RWPE1 (cell line): ENCODE measurements at regions of chr11 and their contacts with region 1.

Region 1: DNA sequence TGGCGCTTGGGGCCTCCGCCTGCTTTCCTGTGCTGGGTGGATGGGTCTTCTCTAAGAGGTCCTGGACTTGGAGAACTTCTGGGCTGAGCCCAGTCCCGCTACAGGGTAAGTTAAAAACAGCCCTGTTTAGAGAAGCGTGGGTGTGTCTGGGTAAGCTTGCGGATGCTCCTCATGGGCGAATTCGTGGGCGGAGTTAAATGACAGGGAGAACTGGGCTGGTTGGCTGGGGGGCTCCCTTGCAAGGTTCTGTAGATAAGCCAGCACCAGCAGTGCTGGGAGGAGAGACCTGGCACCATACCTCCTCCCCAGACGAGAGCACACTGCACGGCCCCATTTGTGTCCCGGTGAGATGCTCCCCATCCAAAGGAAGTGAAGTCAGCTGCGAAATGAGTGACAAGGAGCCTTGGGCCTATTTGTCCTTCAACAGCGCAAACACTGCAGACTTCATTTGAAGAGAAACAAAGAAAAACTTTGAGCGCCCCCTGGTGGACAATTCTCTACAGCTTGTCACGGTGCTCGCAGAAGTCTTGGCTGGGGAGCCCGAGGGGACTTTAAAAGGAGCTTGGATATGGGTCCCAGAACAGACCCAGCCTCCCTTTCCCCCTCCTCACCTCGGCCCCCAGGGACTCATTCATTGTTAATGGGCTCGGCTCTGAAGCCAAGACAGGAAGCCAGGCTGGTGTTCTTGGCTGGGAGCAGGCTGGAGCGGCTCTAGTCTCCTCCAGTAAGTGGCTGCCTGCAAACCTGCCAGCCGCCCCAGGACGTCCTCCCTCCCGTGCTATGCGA is 39.5 kb downstream of the TP53I11 start:
- DNase-seq: peak; percentile 69
- H3K27ac ChIP-seq: no peak overlapping the region
- CTCF ChIP-seq: peak; percentile 76

Region 2: DNA sequence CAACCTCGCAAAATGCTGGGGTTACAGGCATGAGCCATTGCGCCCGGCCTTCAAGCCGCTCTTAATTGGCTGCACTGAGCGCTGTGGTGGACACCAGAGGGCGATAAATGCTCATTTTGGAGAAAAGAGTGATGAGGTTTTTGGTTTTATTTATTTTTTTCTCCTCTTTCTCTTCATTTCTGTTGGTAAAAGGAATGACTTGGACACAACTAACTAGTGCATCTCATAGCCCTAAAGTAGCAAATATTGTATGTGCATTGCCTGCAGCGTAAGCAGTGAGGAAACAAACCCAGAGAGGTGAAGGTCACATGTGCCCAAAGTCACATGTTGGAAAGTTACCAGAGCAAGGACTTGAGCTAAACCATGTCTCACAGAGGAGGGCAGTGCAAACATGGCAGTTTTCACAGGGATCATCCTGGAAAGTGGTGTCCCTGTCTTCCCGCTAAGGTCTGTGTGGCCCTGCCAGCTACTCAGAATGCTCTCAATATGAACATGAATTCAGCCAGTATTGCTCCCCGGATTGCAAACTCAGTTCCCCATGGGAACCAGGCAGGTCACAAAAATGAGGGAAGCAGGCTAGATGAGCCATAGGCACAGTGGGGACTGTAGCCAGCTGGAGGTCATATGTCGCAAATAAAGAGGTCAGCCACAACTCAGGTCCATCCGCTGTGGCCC is 354.4 kb before region 1 on chr11:
- CTCF ChIA-PET with region 1: interaction called, 10 read pairs
- POLR2A ChIA-PET with region 1: no interaction called
- DNase-seq: no peak
- H3K27ac ChIP-seq: peak overlapping the region; percentile 22; the same call in 1 of the 2 replicates
- CTCF ChIP-seq: peak; percentile 85

Region 3: GRCh38 chr11:44621140-44621681 is 290.0 kb before region 1 on chr11:
- CTCF ChIA-PET with region 1: interaction called, 12 read pairs
- POLR2A ChIA-PET with region 1: no interaction called
- DNase-seq: peak; percentile 74
- H3K27ac ChIP-seq: no peak overlapping the region
- CTCF ChIP-seq: peak; percentile 93

Region 4: DNA sequence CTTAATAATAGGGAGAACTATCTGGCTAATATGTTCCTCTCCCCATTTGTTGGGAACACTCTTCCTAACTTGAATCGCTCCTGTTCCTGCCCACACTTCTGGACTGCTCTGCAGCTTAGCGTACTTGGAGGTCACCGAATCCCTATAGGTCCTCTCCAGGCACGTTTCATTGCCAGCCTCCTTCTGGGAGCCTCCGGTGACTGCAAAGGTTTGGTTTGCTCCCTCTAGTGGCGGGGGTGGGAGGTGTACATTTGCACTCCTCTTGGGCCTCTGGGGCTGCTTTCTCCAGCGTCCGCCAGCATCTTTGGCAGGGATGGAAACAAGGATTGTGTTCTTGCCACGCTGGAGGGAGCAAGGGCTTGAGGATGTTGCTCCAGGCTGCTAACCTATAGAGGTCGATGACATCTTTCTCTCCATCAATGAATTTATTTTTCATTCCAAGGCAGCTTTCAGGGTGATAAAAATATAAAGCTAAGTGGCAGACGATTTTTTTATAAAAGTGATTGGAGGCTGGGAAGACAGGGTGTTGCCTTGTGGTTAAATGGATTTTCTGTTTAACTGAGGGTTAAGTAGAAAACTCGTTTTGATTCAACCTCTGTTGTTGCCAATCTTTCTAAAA is 135.7 kb before region 1 on chr11:
- CTCF ChIA-PET with region 1: interaction called, 11 read pairs
- POLR2A ChIA-PET with region 1: no interaction called
- DNase-seq: peak; percentile 71
- H3K27ac ChIP-seq: no peak overlapping the region
- CTCF ChIP-seq: peak; percentile 53

Region 5: DNA sequence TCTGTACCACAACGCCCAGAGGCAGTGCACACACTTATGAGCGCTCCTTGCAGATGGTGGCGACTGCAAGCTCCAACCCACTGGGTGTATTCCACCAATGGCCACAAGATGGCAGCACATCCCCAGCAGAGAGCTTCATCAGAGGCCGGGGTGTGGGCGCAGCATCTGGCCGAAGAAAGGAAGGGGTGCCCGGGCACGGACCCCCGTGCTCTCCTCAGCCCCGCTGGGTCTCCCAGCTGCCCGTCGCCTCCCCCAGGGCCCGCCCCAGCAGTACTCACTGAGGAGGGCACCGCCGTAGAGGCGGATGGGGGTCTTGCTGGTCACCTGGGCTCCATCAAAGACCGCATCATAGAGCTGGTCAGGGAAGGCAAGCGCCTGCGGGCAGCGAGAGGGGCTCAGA is 25.3 kb after region 1 on chr11:
- CTCF ChIA-PET with region 1: interaction called, 10 read pairs
- POLR2A ChIA-PET with region 1: no interaction called
- DNase-seq: peak; percentile 68
- H3K27ac ChIP-seq: peak overlapping the region; percentile 70
- CTCF ChIP-seq: peak; percentile 90

Region 6: GRCh38 chr11:44955015-44955738 is 44.0 kb after region 1 on chr11:
- CTCF ChIA-PET with region 1: no interaction called
- POLR2A ChIA-PET with region 1: no interaction called
- DNase-seq: peak; percentile 56
- H3K27ac ChIP-seq: peak overlapping the region; percentile 77
- CTCF ChIP-seq: no peak

Region 7: GRCh38 chr11:45133871-45134270 is 222.6 kb after region 1 on chr11:
- CTCF ChIA-PET with region 1: no interaction called
- POLR2A ChIA-PET with region 1: no interaction called
- DNase-seq: no peak
- H3K27ac ChIP-seq: no peak overlapping the region
- CTCF ChIP-seq: no peak